ENCODE measurements at regions of chrX and their contacts with region 1.

Region 1: GRCh38 chrX:140141444-140142029 is 176.2 kb upstream of the CXorf66 start:
- DNase-seq: peak; percentile 18
- H3K4me3 ChIP-seq: no peak overlapping the region
- H3K27ac ChIP-seq: no peak overlapping the region
- H3K4me1 ChIP-seq: no peaks in the 10 kb centered on the region
- CTCF ChIP-seq: peak; percentile 72

Region 2: GRCh38 chrX:139795196-139795595 is 346.3 kb before region 1 on chrX:
- CTCF ChIA-PET with region 1: no interaction called
- POLR2A ChIA-PET with region 1: no interaction called
- intact Hi-C with region 1: no loop called
- DNase-seq: no peak
- H3K4me3 ChIP-seq: no peak overlapping the region
- H3K27ac ChIP-seq: no peak overlapping the region
- H3K4me1 ChIP-seq: no peaks in the 10 kb centered on the region
- CTCF ChIP-seq: no peak

Region 3: DNA sequence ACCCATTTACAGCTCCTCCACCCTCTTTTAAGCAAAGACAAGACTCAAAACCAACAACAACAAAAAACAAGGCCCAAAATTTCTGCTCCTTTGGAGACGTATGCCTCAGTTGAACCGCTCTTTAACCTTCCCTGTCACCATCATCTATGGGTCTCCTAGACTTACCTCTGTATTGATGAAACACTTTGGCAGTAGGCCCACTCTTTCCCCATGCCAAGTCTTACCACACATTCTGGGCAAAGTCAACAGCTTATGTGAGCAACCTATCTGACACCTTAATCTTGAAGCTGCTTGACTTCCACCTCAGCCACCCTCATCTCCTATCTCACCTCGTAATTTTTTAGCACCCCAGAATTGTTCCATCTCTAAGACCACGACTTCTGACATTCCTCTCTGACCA is 76.5 kb before region 1 on chrX:
- CTCF ChIA-PET with region 1: no interaction called
- POLR2A ChIA-PET with region 1: no interaction called
- intact Hi-C with region 1: loop called (anchors 5 kb)
- DNase-seq: no peak
- H3K4me3 ChIP-seq: no peak overlapping the region
- H3K27ac ChIP-seq: no peak overlapping the region
- H3K4me1 ChIP-seq: no peaks in the 10 kb centered on the region
- CTCF ChIP-seq: no peak

Region 4: GRCh38 chrX:140071037-140071436 is 70.5 kb before region 1 on chrX:
- CTCF ChIA-PET with region 1: no interaction called
- POLR2A ChIA-PET with region 1: no interaction called
- intact Hi-C with region 1: loop called (anchors 5 kb)
- DNase-seq: no peak
- H3K4me3 ChIP-seq: no peak overlapping the region
- H3K27ac ChIP-seq: no peak overlapping the region
- H3K4me1 ChIP-seq: no peaks in the 10 kb centered on the region
- CTCF ChIP-seq: no peak

Measured in OCI-LY7 (cell line).